Vagina (tissue), 2 donors: ENCODE measurements at regions of chrX and their contacts with region 1.

Region 1: DNA sequence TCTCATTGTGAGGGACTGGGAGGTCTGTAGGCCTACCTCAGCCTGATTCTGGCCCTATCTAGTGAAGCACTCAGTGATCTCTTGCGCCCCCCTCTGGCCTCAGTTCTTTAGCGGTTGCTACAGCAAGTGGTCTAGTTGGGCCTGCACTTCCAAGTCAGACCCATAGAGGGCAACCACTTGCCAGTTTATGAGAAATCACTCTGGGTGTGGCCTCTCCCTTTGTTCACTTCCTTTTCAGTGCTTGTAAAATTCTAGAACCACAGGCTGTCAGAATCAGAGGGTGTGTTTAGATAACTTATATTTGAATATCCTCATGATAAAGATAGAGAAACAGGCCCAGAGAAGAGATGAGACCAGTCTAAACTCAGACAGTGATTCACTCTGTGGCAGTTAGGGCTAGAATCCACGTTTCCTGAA is 60.9 kb upstream of the LAS1L start:
- DNase-seq: peak in 1 of 2 donors; percentile 91
- H3K4me3 ChIP-seq: no peak overlapping the region
- H3K27ac ChIP-seq: peak overlapping the region; percentile 80
- H3K4me1 ChIP-seq: peaks cover 18% of the 10 kb centered on the region
- H3K27me3 ChIP-seq: no peaks in the 10 kb centered on the region
- CTCF ChIP-seq: peak; percentile 97 to 100 (median 99)
- POLR2A ChIP-seq: no peak

Region 2: GRCh38 chrX:65706041-65706828 is 110.8 kb after region 1 on chrX:
- intact Hi-C with region 1: loop called (anchors 10 kb)
- DNase-seq: no peak
- H3K4me3 ChIP-seq: no peak overlapping the region
- H3K27ac ChIP-seq: peak overlapping the region; percentile 79
- H3K4me1 ChIP-seq: peaks cover 42% of the 10 kb centered on the region
- H3K27me3 ChIP-seq: no peaks in the 10 kb centered on the region
- CTCF ChIP-seq: no peak
- POLR2A ChIP-seq: no peak

Region 3: GRCh38 chrX:66408507-66408906 is 813.0 kb after region 1 on chrX:
- intact Hi-C with region 1: no loop called
- DNase-seq: no peak
- H3K4me3 ChIP-seq: no peak overlapping the region
- H3K27ac ChIP-seq: no peak overlapping the region
- H3K4me1 ChIP-seq: no peaks in the 10 kb centered on the region
- H3K27me3 ChIP-seq: no peaks in the 10 kb centered on the region
- CTCF ChIP-seq: no peak
- POLR2A ChIP-seq: no peak